ENCODE measurements at regions of chr17 and their contacts with region 1.

Region 1: GRCh38 chr17:27968206-27968732 is 74.2 kb upstream of the NLK start:
- DNase-seq: no peak
- H3K4me3 ChIP-seq: no peak overlapping the region
- H3K27ac ChIP-seq: no peak overlapping the region
- H3K4me1 ChIP-seq: no peaks in the 10 kb centered on the region
- H3K27me3 ChIP-seq: no peaks in the 10 kb centered on the region
- CTCF ChIP-seq: no peak

Region 2: GRCh38 chr17:27919079-27919478 is 49.2 kb before region 1 on chr17:
- CTCF ChIA-PET with region 1: no interaction called
- POLR2A ChIA-PET with region 1: no interaction called
- intact Hi-C with region 1: loop called (anchors 5 kb)
- DNase-seq: no peak
- H3K4me3 ChIP-seq: no peak overlapping the region
- H3K27ac ChIP-seq: no peak overlapping the region
- H3K4me1 ChIP-seq: no peaks in the 10 kb centered on the region
- H3K27me3 ChIP-seq: no peaks in the 10 kb centered on the region
- CTCF ChIP-seq: no peak

Measured in A673 (cell line).